ENCODE measurements at regions of chr10 and their contacts with region 1.

Region 1: DNA sequence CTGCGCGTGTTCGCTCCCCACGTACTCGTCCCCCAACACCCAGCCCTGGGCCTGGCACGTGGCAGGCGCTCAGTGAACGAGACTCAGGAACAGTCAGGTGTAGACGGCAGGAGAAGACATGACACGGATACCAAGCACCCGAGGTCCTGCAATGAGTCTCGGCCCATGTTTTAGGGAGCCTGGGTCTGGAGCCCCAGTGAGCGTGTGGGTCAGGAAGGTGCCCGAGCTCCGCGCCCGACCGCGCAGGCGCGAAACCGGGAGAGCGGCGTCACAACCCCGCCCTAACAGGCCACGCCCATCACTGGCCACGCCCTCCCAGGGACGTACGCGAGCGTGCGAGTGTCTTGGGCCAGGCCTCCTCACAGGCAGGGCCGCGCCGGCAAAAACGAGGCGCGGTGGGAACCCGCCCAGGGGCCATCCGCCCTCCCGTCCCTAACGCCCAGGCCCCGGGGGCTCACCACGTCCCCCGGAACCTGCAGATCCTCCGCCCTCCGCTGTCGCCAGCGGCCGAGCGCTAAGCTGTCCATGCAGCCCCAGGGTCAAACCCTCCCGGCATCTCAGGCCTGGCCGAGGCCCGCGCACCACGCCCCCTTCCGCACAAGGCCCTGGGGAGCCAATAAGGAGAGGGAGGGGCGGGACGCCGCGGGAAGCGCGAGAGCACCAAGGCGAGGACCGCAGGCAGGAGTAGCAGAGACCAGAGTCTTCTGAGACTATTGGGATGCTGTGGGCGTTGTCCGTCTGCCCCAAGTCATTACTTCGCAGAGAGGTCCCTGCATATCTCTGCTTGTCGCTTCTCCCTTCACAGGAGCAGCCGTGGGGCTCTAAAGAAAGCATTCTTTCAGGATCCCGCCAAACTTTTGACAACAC is at the start of gene C10orf143:
- DNase-seq: peak; percentile 96
- ATAC-seq: peak; percentile 91
- H3K4me3 ChIP-seq: peak within 1 kb of the TSS; percentile 71
- H3K27ac ChIP-seq: peak within 1 kb of the TSS; percentile 81
- H3K4me1 ChIP-seq: no peaks in the 10 kb centered on the region
- H3K27me3 ChIP-seq: no peaks in the 10 kb centered on the region
- CTCF ChIP-seq: no peak
- POLR2A ChIP-seq: peak; percentile 75
- RAD21 ChIP-seq: no peak
- total RNA-seq, gene C10orf143: 0.36 and 0.56 TPM in 2 replicates

Region 2: DNA sequence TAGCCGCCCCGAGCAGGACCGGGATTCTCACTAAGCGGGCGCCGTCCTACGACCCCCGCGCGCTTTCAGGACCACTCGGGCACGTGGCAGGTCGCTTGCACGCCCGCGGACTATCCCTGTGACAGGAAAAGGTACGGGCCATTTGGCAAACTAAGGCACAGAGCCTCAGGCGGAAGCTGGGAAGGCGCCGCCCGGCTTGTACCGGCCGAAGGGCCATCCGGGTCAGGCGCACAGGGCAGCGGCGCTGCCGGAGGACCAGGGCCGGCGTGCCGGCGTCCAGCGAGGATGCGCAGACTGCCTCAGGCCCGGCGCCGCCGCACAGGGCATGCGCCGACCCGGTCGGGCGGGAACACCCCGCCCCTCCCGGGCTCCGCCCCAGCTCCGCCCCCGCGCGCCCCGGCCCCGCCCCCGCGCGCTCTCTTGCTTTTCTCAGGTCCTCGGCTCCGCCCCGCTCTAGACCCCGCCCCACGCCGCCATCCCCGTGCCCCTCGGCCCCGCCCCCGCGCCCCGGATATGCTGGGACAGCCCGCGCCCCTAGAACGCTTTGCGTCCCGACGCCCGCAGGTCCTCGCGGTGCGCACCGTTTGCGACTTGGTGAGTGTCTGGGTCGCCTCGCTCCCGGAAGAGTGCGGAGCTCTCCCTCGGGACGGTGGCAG is 643.6 kb before region 1 on chr10 and contains the start of gene MGMT:
- CTCF ChIA-PET with region 1: no interaction called
- POLR2A ChIA-PET with region 1: no interaction called
- dilution Hi-C with region 1: no loop called
- in situ Hi-C with region 1: no loop called
- intact Hi-C with region 1: loop called (anchors 2 kb)
- DNase-seq: peak; percentile 76
- ATAC-seq: peak; percentile 99
- H3K4me3 ChIP-seq: peak within 1 kb of the TSS; percentile 91
- H3K27ac ChIP-seq: peak within 1 kb of the TSS; percentile 73
- H3K4me1 ChIP-seq: peaks cover 4% of the 10 kb centered on the region; the same call in 1 of the 2 replicates
- H3K27me3 ChIP-seq: no peaks in the 10 kb centered on the region; the same call in 1 of the 2 replicates
- CTCF ChIP-seq: no peak
- POLR2A ChIP-seq: peak; percentile 26; the same call in 1 of the 2 replicates
- RAD21 ChIP-seq: no peak
- total RNA-seq, gene MGMT: 11.1 and 11.5 TPM in 2 replicates

Region 3: GRCh38 chr10:129982825-129983224 is 127.7 kb before region 1 on chr10:
- CTCF ChIA-PET with region 1: no interaction called
- POLR2A ChIA-PET with region 1: no interaction called
- dilution Hi-C with region 1: no loop called
- in situ Hi-C with region 1: no loop called
- intact Hi-C with region 1: no loop called
- DNase-seq: no peak
- ATAC-seq: no peak
- H3K4me3 ChIP-seq: no peak overlapping the region
- H3K27ac ChIP-seq: no peak overlapping the region
- H3K4me1 ChIP-seq: no peaks in the 10 kb centered on the region
- H3K27me3 ChIP-seq: peaks cover under 1% of the 10 kb centered on the region; the same call in 1 of the 2 replicates
- CTCF ChIP-seq: no peak
- POLR2A ChIP-seq: no peak
- RAD21 ChIP-seq: no peak

Region 4: DNA sequence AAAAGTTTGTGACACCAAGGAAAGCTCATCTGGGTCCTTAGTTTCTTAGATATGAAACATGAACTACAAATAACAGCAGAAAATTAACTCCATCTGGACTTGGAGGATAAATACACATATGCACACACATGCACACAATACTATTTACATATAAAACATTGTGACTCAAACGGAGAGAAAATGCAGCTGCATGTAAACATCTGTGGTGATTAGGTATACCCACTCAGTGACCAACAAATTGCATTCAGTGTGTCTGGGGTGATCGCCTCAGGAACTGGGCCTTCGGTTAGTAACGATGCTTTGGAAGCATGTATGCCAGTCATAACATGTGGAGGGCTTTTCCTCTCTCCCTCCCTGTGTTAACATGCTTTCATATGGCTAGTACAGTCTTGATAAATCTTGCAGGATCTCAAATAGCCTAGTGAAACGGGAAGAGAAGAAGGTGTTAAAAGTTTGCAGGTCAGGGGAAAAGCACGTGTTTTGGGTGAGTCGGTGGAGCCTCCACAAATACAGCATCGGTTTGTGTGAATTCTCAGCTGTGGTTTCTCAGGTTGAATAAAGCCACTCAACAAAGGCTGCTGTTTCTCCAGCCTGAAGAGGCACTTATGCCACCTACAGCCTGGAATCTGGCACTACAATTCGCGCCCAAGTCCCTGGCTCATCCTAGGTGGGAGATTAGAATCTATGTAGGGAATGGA is 17.0 kb after region 1 on chr10:
- CTCF ChIA-PET with region 1: interaction called, 10 read pairs
- POLR2A ChIA-PET with region 1: interaction called, 5 read pairs
- dilution Hi-C with region 1: no loop called
- in situ Hi-C with region 1: no loop called
- intact Hi-C with region 1: no loop called
- DNase-seq: peak; percentile 70
- ATAC-seq: peak; percentile 99; the same call in 1 of the 2 replicates
- H3K4me3 ChIP-seq: no peak overlapping the region
- H3K27ac ChIP-seq: no peak overlapping the region
- H3K4me1 ChIP-seq: peaks cover 2% of the 10 kb centered on the region; the same call in 1 of the 2 replicates
- H3K27me3 ChIP-seq: peaks cover 8% of the 10 kb centered on the region; the same call in 1 of the 2 replicates
- CTCF ChIP-seq: peak; percentile 83
- POLR2A ChIP-seq: no peak
- RAD21 ChIP-seq: peak; percentile 74

Region 5: DNA sequence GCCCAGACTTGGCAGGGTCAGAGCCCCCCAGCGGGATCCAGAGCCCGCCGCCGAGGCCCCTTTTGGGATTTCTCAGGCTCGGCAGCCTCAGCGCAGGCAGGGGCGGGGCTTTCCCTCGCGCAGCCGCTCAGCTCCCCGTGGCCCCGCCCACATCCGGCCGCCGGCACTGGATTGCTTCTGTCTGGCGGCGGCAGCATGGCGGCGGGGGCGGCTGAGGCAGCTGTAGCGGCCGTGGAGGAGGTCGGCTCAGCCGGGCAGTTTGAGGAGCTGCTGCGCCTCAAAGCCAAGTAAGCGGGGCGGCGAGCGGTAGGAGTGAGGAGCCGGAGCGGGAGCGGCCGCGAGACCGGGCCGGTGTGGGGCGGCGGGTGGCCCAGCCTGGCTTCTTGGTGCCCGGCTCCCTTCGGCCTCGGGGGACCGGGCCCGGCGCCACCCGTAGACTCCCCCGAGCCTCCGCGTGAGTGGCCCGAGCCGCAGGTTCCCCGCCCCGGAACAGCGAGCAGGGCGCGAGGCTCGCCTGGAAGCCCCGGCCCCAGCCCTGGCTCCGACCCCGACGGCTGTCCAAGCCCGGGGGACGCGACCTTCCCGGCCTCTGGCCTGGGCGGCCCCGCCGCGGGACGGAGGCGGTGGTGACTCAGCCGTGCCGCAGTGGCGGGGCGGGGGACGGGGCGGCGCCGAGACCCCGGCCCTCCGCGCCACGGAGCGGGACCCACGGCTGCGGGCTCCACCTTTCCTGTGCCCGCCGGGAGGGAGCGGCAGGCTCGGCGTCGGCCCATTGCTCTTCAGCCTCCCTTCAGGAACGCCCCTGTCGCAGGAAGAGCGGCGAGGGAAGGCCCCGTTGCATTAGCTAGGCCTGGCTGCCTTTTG is 26.0 kb after region 1 on chr10 and contains the start of gene GLRX3:
- CTCF ChIA-PET with region 1: interaction called, 5 read pairs
- POLR2A ChIA-PET with region 1: interaction called, 8 read pairs
- dilution Hi-C with region 1: no loop called
- in situ Hi-C with region 1: no loop called
- intact Hi-C with region 1: loop called (anchors 1 kb)
- DNase-seq: peak; percentile 71
- ATAC-seq: peak; percentile 96
- H3K4me3 ChIP-seq: peak within 1 kb of the TSS; percentile 80
- H3K27ac ChIP-seq: peak within 1 kb of the TSS; percentile 86
- H3K4me1 ChIP-seq: peaks cover 13% of the 10 kb centered on the region
- H3K27me3 ChIP-seq: no peaks in the 10 kb centered on the region
- CTCF ChIP-seq: no peak
- POLR2A ChIP-seq: peak; percentile 81
- RAD21 ChIP-seq: no peak
- total RNA-seq, gene GLRX3: 78.7 and 96.7 TPM in 2 replicates

Region 6: DNA sequence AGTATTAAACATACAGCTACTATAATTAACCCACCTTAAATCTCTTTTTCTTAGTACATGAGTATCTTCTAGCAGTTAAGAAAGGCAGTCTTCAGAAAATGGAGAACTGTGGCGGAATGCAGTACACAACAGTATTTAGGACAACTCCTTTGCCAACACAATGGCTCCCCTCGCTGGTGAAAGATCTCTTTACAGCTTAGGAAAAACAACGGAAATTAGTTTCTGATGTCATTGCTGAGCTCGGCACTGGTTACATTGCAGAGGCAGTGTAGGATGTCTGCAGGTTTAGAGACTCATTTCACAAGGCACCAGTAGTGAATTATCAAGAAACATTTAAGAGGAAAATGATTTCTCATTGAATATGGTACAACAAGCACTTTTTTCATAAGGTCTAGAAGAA is 69.2 kb after region 1 on chr10:
- CTCF ChIA-PET with region 1: interaction called, 3 read pairs
- POLR2A ChIA-PET with region 1: no interaction called
- dilution Hi-C with region 1: no loop called
- in situ Hi-C with region 1: no loop called
- intact Hi-C with region 1: loop called (anchors 2 kb)
- DNase-seq: peak; percentile 78
- ATAC-seq: peak; percentile 94
- H3K4me3 ChIP-seq: no peak overlapping the region
- H3K27ac ChIP-seq: no peak overlapping the region
- H3K4me1 ChIP-seq: no peaks in the 10 kb centered on the region
- H3K27me3 ChIP-seq: no peaks in the 10 kb centered on the region
- CTCF ChIP-seq: peak; percentile 60
- POLR2A ChIP-seq: no peak
- RAD21 ChIP-seq: peak; percentile 65